ENCODE measurements at regions of chrX and their contacts with region 1.

Region 1: GRCh38 chrX:23907498-23908218 is at the starts of genes APOO and CXorf58:
- DNase-seq: peak; percentile 86
- H3K4me3 Mint-ChIP-seq: peak within 1 kb of the TSS; percentile 69
- H3K27ac Mint-ChIP-seq: peak within 1 kb of the TSS; percentile 66
- H3K4me1 Mint-ChIP-seq: no peaks in the 10 kb centered on the region
- H3K27me3 Mint-ChIP-seq: peaks cover 30% of the 10 kb centered on the region
- CTCF ChIP-seq: peak; percentile 48
- total RNA-seq, gene APOO: 35.9 and 37.2 TPM in 2 replicates
- total RNA-seq, gene CXorf58: not detected in 2 replicates

Region 2: GRCh38 chrX:23626651-23627050 is 281.0 kb before region 1 on chrX:
- CTCF ChIA-PET with region 1: no interaction called
- POLR2A ChIA-PET with region 1: no interaction called
- intact Hi-C with region 1: no loop called
- DNase-seq: no peak
- H3K4me3 Mint-ChIP-seq: no peak overlapping the region
- H3K27ac Mint-ChIP-seq: no peak overlapping the region
- H3K4me1 Mint-ChIP-seq: no peaks in the 10 kb centered on the region
- H3K27me3 Mint-ChIP-seq: peaks cover 58% of the 10 kb centered on the region
- CTCF ChIP-seq: no peak

Region 3: DNA sequence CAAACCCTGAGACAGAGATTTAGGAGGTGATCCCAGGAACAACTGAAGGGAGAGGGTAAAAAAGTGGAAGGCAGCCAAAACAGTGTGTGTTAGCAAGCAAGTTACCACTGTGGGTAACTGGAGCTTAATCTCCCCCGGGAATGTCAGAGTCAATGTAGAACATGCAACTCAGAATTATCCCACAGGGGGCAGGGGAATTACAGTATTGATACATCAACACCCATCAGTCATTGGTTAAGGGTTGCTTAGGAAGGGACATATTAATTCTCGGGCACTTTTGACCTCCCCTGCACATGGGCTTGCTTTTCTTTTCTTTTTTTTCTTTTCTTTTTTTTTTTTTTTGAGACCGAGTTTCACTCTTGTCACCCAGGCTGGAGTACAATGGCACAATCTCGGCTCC is 29.4 kb after region 1 on chrX:
- CTCF ChIA-PET with region 1: no interaction called
- POLR2A ChIA-PET with region 1: no interaction called
- intact Hi-C with region 1: no loop called
- DNase-seq: no peak
- H3K4me3 Mint-ChIP-seq: no peak overlapping the region
- H3K27ac Mint-ChIP-seq: no peak overlapping the region
- H3K4me1 Mint-ChIP-seq: no peaks in the 10 kb centered on the region
- H3K27me3 Mint-ChIP-seq: peaks cover 56% of the 10 kb centered on the region
- CTCF ChIP-seq: no peak

Region 4: GRCh38 chrX:24024819-24025740 is 117.4 kb after region 1 on chrX:
- CTCF ChIA-PET with region 1: interaction called, 3 read pairs
- POLR2A ChIA-PET with region 1: interaction called, 42 read pairs
- intact Hi-C with region 1: loop called (anchors 2 kb)
- DNase-seq: peak; percentile 83
- H3K4me3 Mint-ChIP-seq: peak overlapping the region; percentile 73
- H3K27ac Mint-ChIP-seq: peak overlapping the region; percentile 77
- H3K4me1 Mint-ChIP-seq: peaks cover 4% of the 10 kb centered on the region
- H3K27me3 Mint-ChIP-seq: peaks cover 41% of the 10 kb centered on the region
- CTCF ChIP-seq: no peak

Region 5: DNA sequence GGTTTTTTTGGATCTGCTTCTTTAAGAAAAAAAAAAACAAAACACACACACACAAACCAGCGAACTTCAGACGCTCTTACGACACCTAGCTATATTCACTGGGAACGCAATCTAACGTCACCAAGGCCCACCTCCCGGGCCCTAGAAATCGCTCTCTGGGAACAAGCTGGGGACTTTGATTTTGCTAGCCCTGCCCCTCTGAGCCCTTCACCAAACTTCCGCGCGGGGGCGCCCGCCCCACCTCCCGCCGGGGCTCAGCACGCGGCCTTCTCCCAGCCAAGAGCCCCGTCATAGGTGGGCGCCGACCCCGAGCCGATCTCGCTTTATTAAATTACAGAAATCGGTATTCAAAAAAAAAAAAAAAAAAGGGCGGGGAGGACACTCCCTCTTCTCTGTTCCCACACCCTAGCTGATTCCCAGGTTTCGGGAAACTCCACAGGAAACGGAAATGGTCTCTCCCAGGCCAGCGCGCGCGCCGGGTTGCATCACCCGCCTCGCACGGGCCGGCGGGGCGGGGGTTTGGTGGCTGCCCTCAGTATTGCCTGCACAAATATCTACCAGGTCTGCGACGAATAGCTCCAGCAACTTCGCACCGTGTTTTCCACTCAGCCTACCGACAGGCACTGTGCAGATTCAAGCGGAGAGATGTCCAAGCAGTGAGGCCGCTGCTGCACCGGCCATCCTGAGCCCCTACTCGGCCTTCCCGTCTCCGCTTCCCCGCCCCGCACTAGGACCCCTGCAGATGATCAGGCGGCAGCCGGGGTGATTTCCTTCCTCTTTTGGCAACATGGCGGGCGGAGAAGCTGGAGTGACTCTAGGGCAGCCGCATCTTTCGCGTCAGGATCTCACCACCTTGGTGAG is 146.8 kb after region 1 on chrX and contains the start of gene EIF2S3:
- CTCF ChIA-PET with region 1: interaction called, 18 read pairs
- POLR2A ChIA-PET with region 1: interaction called, 43 read pairs
- intact Hi-C with region 1: loop called (anchors 1 kb)
- DNase-seq: peak; percentile 98
- H3K4me3 Mint-ChIP-seq: no peak within 1 kb of the TSS
- H3K27ac Mint-ChIP-seq: peak within 1 kb of the TSS; percentile 99
- H3K4me1 Mint-ChIP-seq: no peaks in the 10 kb centered on the region
- H3K27me3 Mint-ChIP-seq: peaks cover 10% of the 10 kb centered on the region
- CTCF ChIP-seq: peak; percentile 50
- total RNA-seq, gene EIF2S3: 354 and 391 TPM in 2 replicates

Region 6: DNA sequence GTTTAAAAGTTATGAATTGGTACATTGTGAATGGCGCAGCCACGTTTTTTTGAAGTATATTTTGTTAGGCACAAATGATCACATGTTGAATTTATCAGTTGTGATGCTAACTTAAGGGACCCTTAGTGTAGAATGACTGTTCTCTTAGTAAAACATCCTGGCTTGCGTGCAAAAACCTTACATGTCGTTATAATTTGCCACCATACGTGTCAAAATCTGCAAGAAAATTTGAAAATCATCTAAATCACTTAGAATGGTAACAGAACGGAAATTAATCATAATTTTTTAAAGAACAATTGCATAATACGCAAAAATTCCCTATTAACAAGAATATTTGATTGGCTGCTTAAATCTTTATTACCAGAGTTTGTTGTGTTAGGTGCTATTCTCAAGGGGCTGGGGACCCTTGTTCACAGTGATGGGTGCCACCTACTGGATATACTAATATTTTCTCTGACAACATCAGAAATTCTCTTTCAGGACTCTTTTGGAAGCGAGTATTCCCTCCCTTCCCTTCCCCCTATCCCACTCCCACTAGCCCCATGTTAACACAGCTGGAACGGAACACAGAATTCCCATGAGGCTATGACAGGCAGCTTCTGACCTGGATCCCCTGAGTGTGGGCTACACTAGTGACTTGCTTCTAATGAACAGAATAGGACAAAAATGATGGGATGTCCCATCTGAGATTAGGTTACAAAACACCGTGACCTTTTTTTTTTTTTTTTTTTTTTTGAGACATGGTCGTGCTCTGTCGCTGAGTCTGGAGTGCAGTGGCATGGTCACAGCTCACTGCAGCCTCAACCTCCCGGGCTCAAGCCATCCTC is 334.4 kb after region 1 on chrX:
- CTCF ChIA-PET with region 1: no interaction called
- POLR2A ChIA-PET with region 1: no interaction called
- intact Hi-C with region 1: loop called (anchors 2 kb)
- DNase-seq: peak; percentile 58
- H3K4me3 Mint-ChIP-seq: no peak overlapping the region
- H3K27ac Mint-ChIP-seq: no peak overlapping the region
- H3K4me1 Mint-ChIP-seq: peaks cover 20% of the 10 kb centered on the region
- H3K27me3 Mint-ChIP-seq: peaks cover 27% of the 10 kb centered on the region
- CTCF ChIP-seq: peak; percentile 36

Measured in MCF 10A (cell line).